Sigmoid colon (tissue), 7 donors: ENCODE measurements at regions of chr1 and their contacts with region 1.

Region 1: GRCh38 chr1:19715334-19716203 is 50.9 kb downstream of the HTR6 start:
- DNase-seq: peak; percentile 94
- H3K4me3 ChIP-seq: no peak overlapping the region
- H3K27ac ChIP-seq: peak overlapping the region in 1 of 4 donors; percentile 23
- H3K4me1 ChIP-seq: peaks cover 0 to 6% (median 3%) of the 10 kb centered on the region in 4 donors
- H3K27me3 ChIP-seq: no peaks in the 10 kb centered on the region
- CTCF ChIP-seq: peak; percentile 51 to 84 (median 76)
- EP300 ChIP-seq: no peak
- POLR2A ChIP-seq: no peak

Region 2: DNA sequence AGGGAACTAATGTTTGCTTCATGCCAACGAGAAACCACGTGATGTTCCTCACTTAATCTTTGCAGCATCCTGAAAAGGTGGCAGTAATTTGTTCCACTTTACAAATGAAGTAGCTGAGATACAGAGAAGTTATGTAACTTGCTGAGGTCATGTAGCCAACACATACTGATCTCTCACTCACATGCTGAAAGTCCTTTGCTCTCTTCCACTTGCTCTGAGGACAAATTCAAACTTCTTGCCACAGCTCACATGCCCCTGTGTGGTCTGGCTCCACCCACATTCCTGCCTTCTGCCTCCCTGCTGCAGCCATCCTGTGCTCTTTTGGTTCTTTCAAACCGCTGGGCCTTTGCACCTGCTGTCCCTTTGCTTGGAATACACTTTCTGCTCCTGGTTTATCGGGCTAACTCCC is 28.8 kb after region 1 on chr1:
- intact Hi-C with region 1: no loop called
- DNase-seq: no peak
- H3K4me3 ChIP-seq: no peak overlapping the region
- H3K27ac ChIP-seq: no peak overlapping the region
- H3K4me1 ChIP-seq: no peaks in the 10 kb centered on the region
- H3K27me3 ChIP-seq: no peaks in the 10 kb centered on the region
- CTCF ChIP-seq: no peak
- EP300 ChIP-seq: no peak
- POLR2A ChIP-seq: no peak

Region 3: DNA sequence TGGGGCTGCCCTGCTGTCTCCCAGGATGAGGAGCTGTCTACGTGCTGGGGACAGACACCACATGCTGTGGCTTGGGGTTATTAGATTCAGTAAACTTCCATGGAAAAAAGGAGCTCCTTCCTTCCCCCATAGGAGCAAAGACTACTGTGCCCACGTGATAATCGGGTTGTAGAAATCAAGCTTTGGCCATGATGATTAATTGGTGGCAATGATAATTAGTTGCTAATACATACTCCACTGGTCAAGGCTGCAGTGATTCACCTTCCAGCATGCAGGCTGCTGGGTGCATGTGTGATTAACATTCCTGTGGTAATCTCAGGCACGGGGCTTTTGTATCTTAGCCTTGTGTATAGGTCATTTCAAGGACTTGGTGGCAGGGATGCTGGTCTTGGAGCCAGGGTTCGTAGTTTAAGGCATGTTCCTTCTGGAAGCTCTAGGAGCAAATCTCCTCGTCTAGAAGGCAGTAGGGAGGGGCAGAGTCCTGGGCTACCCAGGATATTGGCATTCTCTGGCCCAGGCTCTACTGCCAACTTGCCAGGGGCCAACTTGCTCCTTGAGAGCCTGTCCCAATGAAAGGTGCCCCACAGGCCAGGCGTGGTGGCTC is 42.8 kb after region 1 on chr1:
- intact Hi-C with region 1: loop called (anchors 5 kb)
- DNase-seq: no peak
- H3K4me3 ChIP-seq: no peak overlapping the region
- H3K27ac ChIP-seq: peak overlapping the region in 1 of 4 donors; percentile 27
- H3K4me1 ChIP-seq: peaks cover 0 to 20% (median 19%) of the 10 kb centered on the region in 4 donors
- H3K27me3 ChIP-seq: no peaks in the 10 kb centered on the region
- CTCF ChIP-seq: no peak
- EP300 ChIP-seq: no peak
- POLR2A ChIP-seq: no peak

Region 4: GRCh38 chr1:19799877-19800804 is 84.6 kb after region 1 on chr1 and contains the start of gene TMCO4:
- intact Hi-C with region 1: loop called (anchors 5 kb)
- DNase-seq: peak; percentile 74
- H3K4me3 ChIP-seq: peak within 1 kb of the TSS; percentile 40 to 70 (median 68)
- H3K27ac ChIP-seq: peak within 1 kb of the TSS; percentile 82 to 85 (median 84)
- H3K4me1 ChIP-seq: peaks cover 0 to 18% (median 12%) of the 10 kb centered on the region in 4 donors
- H3K27me3 ChIP-seq: no peaks in the 10 kb centered on the region
- CTCF ChIP-seq: no peak
- EP300 ChIP-seq: no peak
- POLR2A ChIP-seq: no peak
- total RNA-seq, gene TMCO4: 16.3 to 24.2 (median 22.0) TPM

Region 5: GRCh38 chr1:19811206-19811851 is 95.8 kb after region 1 on chr1:
- intact Hi-C with region 1: loop called (anchors 5 kb)
- DNase-seq: no peak
- H3K4me3 ChIP-seq: no peak overlapping the region
- H3K27ac ChIP-seq: no peak overlapping the region
- H3K4me1 ChIP-seq: no peaks in the 10 kb centered on the region
- H3K27me3 ChIP-seq: no peaks in the 10 kb centered on the region
- CTCF ChIP-seq: peak in 3 of 4 experiments; percentile 26 to 40 (median 32)
- EP300 ChIP-seq: no peak
- POLR2A ChIP-seq: no peak